IMR-90 (cell line): ENCODE measurements at regions of chr11 and their contacts with region 1.

Region 1: GRCh38 chr11:94493281-94494125 is at the starts of genes ANKRD49 and MRE11:
- DNase-seq: peak; percentile 98
- ATAC-seq: peak; percentile 100
- H3K4me3 ChIP-seq: peak within 1 kb of the TSS; percentile 77
- H3K27ac ChIP-seq: peak within 1 kb of the TSS; percentile 60
- H3K4me1 ChIP-seq: no peaks in the 10 kb centered on the region
- H3K27me3 ChIP-seq: no peaks in the 10 kb centered on the region
- CTCF ChIP-seq: no peak
- POLR2A ChIP-seq: peak; percentile 68; the same call in 1 of the 2 replicates
- RAD21 ChIP-seq: no peak
- total RNA-seq, gene ANKRD49: 10.4 and 15.8 TPM in 2 replicates
- total RNA-seq, gene MRE11: 15.6 and 22.2 TPM in 2 replicates

Region 2: DNA sequence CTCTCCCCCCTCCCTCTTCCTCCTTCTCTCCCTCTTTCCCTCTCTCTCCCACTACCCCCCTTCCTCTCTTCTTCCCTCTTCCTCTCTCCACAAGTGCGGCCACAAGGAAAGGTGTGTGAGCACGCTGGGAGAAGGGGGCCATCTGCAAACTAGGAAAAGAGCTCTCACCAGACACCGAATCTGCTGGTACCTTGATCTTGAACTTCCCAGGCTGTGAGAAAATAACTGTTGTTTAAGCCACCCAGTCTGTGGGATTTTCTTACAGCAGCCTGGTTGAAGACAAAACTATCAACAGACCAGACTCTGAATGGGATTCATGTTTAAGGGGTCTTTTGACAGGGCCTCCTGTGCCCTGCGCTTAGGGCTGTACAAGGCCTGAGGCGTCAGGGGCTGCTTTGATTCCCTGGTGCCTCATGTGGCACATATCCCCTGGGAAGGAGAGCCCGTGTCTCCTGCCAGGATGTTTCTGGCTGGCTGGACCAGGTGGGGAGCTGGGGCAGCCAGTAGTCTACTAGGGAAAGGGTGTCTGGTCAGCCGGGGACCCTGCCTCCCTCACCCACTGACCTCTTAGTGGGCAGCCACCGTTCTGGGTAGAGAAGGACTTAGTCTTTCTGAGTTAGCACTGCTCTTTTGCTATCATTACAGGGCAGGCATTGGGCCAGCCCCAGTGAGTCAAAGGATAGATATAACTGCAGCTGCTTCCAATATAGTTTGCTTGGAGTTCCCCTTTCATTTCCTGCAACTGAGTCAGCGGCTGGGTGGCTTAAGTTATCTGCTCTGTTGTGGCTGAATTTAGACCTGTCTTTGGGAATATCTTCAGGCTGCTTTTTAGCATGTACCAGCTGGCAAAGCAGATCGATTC is 358.6 kb before region 1 on chr11:
- CTCF ChIA-PET with region 1: no interaction called
- POLR2A ChIA-PET with region 1: no interaction called
- dilution Hi-C with region 1: no loop called
- in situ Hi-C with region 1: no loop called
- intact Hi-C with region 1: loop called (anchors 5 kb)
- DNase-seq: peak; percentile 96
- ATAC-seq: peak; percentile 50
- H3K4me3 ChIP-seq: peak overlapping the region; percentile 18; the same call in 1 of the 2 replicates
- H3K27ac ChIP-seq: peak overlapping the region; percentile 92
- H3K4me1 ChIP-seq: peaks cover 34% of the 10 kb centered on the region
- H3K27me3 ChIP-seq: no peaks in the 10 kb centered on the region
- CTCF ChIP-seq: no peak
- POLR2A ChIP-seq: peak; percentile 27; the same call in 1 of the 2 replicates
- RAD21 ChIP-seq: no peak; the same call in 1 of the 2 replicates

Region 3: DNA sequence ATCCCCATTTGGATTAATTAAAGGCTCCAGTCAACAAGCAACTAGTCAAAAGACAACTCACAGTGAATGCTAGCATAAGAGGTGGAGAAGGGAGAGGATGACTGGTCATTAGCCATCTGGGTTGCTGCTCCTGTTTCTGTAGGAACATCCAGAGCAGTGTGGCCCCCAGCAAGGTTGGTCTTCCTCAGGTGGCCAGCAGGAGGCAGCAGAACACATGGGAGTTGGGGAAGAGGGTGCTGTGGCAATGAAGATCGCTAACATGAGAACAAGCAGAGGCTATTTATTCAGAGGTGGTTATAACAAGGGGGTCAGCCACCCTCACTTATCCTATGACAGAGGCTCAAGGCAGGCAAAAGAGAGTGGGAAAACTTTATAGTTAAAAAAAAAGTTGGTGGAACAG is 167.8 kb before region 1 on chr11:
- CTCF ChIA-PET with region 1: no interaction called
- POLR2A ChIA-PET with region 1: no interaction called
- dilution Hi-C with region 1: no loop called
- in situ Hi-C with region 1: no loop called
- intact Hi-C with region 1: loop called (anchors 10 kb)
- DNase-seq: peak; percentile 19
- ATAC-seq: no peak
- H3K4me3 ChIP-seq: no peak overlapping the region
- H3K27ac ChIP-seq: no peak overlapping the region
- H3K4me1 ChIP-seq: no peaks in the 10 kb centered on the region
- H3K27me3 ChIP-seq: peaks cover 1% of the 10 kb centered on the region; the same call in 1 of the 2 replicates
- CTCF ChIP-seq: peak; percentile 30; the same call in 1 of the 2 replicates
- POLR2A ChIP-seq: no peak
- RAD21 ChIP-seq: peak; percentile 32; the same call in 1 of the 2 replicates

Region 4: GRCh38 chr11:94543695-94544645 is 50.5 kb after region 1 on chr11 and contains the start of gene FUT4:
- CTCF ChIA-PET with region 1: no interaction called
- POLR2A ChIA-PET with region 1: no interaction called
- dilution Hi-C with region 1: no loop called
- in situ Hi-C with region 1: no loop called
- intact Hi-C with region 1: no loop called
- DNase-seq: peak; percentile 74
- ATAC-seq: peak; percentile 88
- H3K4me3 ChIP-seq: peak within 1 kb of the TSS; percentile 69
- H3K27ac ChIP-seq: peak within 1 kb of the TSS; percentile 99
- H3K4me1 ChIP-seq: peaks cover 6% of the 10 kb centered on the region
- H3K27me3 ChIP-seq: peaks cover 3% of the 10 kb centered on the region; the same call in 1 of the 2 replicates
- CTCF ChIP-seq: no peak
- POLR2A ChIP-seq: peak; percentile 64
- RAD21 ChIP-seq: no peak
- total RNA-seq, gene FUT4: 2.2 and 3.1 TPM in 2 replicates